Aorta (tissue), 5 donors: ENCODE measurements at regions of chr17 and their contacts with region 1.

Region 1: DNA sequence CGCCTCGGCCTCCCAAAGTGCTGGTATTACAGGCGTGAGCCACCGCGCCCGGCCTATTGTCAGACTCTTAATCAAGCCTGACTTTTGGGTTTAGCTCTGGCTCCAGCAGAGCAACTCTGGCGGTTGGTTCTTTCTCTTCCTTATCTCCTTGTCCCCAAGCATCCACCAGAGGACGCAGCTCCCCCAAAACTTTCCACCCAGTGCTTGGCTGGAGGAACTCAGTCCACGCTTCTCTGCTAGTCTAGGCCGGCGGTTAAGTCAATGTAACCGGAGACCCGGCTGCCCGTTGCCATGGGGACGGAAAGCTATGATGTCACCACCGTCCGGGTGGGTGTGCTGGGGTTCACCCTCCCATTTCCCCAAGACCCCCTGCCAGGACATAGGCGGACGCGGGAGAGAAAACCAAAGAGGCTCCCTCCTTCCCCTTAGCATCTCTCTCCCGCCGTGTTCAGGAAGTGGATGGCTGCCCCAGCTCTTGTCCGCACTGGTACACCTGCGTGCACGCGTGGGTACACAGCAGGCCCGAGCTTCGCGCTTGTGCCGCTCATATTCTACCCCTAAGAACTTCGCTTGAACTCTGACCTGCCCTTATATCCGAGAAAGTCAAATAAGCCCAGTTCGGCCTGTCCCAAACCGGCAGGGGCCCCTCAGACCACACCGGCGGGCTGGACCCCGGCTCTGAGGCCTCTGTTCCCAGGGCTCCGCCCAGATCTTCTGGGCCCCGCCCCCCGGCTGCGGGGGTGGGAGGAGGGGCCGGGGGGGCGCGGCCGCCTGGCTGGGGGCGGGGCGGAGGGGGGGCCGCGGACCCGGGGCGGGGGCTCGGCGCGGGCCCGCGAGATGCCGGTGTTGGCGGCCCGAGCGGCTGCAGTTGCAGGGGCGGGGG is at the start of gene RND2:
- DNase-seq: peak; percentile 94 to 96
- ATAC-seq: peak; percentile 82
- H3K4me3 ChIP-seq: peak within 1 kb of the TSS; percentile 49 to 76
- H3K27ac ChIP-seq: peak within 1 kb of the TSS in 1 of 2 donors; percentile 61
- H3K4me1 ChIP-seq: no peaks in the 10 kb centered on the region
- H3K27me3 ChIP-seq: no peaks in the 10 kb centered on the region
- total RNA-seq, gene RND2: 1.1 to 2.7 TPM

Region 2: DNA sequence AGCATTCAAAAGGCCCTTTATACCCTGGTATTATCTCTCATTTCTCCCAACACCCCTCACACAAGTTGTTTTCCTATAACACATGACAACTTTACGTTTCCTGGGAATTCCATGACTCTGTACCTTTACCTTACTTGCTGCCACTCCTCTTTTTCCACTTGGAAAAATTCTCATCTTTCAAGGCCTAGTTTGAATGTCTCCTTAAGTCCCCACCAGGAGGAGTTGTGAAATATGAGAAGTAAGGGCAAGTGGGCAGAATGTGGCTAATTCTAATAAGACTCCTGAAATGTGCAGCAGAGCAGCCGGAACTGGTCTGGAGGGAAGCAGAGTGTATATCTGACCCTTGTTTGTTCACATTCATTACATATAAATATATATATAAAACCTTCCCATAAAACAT is 60.8 kb after region 1 on chr17:
- intact Hi-C with region 1: loop called (anchors 5 kb)
- DNase-seq: no peak
- ATAC-seq: no peak
- H3K4me3 ChIP-seq: no peak overlapping the region
- H3K27ac ChIP-seq: peak overlapping the region in 1 of 2 donors; percentile 82
- H3K4me1 ChIP-seq: peaks cover 0 to 2% of the 10 kb centered on the region in 2 donors
- H3K27me3 ChIP-seq: no peaks in the 10 kb centered on the region

Region 3: GRCh38 chr17:43094129-43094835 is 69.6 kb after region 1 on chr17:
- intact Hi-C with region 1: loop called (anchors 5 kb)
- DNase-seq: no peak
- ATAC-seq: no peak
- H3K4me3 ChIP-seq: no peak overlapping the region
- H3K27ac ChIP-seq: peak overlapping the region in 1 of 2 donors; percentile 87
- H3K4me1 ChIP-seq: peaks cover 2 to 18% of the 10 kb centered on the region in 2 donors
- H3K27me3 ChIP-seq: no peaks in the 10 kb centered on the region

Region 4: DNA sequence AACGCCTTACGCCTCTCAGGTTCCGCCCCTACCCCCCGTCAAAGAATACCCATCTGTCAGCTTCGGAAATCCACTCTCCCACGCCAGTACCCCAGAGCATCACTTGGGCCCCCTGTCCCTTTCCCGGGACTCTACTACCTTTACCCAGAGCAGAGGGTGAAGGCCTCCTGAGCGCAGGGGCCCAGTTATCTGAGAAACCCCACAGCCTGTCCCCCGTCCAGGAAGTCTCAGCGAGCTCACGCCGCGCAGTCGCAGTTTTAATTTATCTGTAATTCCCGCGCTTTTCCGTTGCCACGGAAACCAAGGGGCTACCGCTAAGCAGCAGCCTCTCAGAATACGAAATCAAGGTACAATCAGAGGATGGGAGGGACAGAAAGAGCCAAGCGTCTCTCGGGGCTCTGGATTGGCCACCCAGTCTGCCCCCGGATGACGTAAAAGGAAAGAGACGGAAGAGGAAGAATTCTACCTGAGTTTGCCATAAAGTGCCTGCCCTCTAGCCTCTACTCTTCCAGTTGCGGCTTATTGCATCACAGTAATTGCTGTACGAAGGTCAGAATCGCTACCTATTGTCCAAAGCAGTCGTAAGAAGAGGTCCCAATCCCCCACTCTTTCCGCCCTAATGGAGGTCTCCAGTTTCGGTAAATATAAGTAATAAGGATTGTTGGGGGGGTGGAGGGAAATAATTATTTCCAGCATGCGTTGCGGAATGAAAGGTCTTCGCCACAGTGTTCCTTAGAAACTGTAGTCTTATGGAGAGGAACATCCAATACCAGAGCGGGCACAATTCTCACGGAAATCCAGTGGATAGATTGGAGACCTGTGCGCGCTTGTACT is 100.7 kb after region 1 on chr17 and contains the start of gene BRCA1:
- intact Hi-C with region 1: loop called (anchors 2 to 5 kb)
- DNase-seq: peak; percentile 94 to 95
- ATAC-seq: peak; percentile 98
- H3K4me3 ChIP-seq: peak within 1 kb of the TSS; percentile 67 to 75
- H3K27ac ChIP-seq: peak within 1 kb of the TSS in 1 of 2 donors; percentile 72
- H3K4me1 ChIP-seq: no peaks in the 10 kb centered on the region
- H3K27me3 ChIP-seq: no peaks in the 10 kb centered on the region
- total RNA-seq, gene BRCA1: 4.3 to 6.6 TPM

Region 5: DNA sequence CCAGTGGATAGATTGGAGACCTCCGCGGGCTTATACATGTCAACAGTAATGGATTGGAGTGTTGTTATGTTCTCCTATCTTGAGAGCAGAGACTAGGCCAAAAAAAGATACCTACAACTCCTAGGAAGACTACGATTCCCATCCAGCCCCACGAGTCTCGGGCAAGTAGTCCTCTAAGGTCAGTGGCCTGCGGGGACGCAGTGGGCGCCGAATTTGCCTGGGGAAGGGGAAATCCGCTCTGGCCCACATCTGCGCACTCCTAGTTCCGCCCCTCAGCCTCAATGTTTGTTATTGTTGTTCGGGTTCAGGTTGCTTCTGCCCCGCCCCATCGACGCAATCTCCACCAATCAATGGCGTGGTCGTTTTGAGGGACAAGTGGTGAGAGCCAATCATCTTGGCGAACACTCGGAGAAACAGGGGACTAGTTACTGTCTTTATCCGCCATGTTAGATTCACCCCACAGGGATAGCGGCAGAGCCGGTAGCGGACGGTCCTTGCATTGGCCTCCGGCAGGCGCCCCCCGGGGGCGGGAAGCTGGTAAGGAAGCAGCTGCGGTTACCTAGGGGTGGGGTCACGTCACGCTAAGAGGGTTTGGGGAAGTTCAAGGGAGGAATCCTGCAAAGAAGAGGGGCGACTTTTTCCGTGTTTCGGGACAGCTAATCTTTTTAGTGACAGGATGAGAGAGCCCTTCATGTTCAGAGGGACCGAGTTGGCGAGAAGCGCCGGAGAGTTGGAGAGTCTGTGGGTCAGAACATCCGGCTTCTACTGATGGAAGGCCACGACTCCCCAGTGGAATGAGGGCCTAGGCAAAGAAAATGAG is 146.3 kb after region 1 on chr17 and contains the start of gene NBR1:
- intact Hi-C with region 1: loop called (anchors 2 to 5 kb)
- DNase-seq: peak; percentile 94 to 96
- ATAC-seq: peak; percentile 94
- H3K4me3 ChIP-seq: peak within 1 kb of the TSS; percentile 79 to 85
- H3K27ac ChIP-seq: peak within 1 kb of the TSS; percentile 96 to 97
- H3K4me1 ChIP-seq: no peaks in the 10 kb centered on the region
- H3K27me3 ChIP-seq: no peaks in the 10 kb centered on the region
- total RNA-seq, gene NBR1: 93.7 to 99.1 TPM

Region 6: DNA sequence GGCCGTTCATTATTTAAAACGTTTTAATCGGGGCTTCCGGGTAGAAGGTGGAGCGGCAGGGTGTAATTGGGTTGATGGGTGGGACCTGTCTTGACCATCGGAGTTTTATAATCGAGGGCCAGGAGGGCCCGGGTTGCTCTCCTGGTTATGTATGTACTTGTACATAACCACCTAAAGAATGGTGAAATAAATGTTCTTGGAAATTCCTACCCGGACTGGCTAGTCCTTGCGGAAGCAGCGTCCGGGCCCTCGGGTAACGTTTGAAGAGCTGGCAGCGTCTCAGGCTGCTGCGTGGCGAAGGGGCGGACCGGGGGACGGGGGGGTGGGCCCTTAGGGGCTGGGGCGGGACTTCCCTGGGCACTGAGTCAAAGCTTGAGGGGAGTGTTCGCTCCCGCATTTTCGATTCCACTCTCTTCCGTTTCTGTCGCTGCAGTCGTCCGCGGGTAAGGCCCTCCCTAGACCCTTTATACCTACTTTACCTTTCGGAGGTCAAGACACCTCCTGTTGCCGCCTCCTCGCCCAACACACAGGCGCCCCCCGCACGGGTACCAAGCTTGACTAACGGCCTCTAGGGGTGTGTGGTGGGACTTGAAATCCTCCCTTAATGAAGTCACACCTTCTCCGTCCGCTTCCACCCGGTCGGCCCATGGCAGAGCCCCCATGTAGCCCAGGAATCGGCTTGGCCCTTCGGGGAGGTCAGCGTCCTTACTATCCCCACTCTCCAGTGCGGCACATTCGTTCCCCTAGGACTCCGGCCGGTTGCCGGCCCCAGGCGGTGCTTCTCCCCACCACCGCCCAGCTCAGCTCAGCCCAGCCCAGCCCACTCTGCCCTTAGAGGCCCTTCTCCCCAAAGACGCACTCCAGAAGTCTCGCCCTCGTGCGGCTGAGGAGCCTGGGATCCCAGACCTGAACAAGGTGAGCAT is 187.1 kb after region 1 on chr17 and contains the start of gene TMEM106A:
- intact Hi-C with region 1: loop called in 1 of 2 experiments (anchors 5 kb)
- DNase-seq: peak; percentile 90 to 94
- ATAC-seq: peak; percentile 88
- H3K4me3 ChIP-seq: peak within 1 kb of the TSS; percentile 43 to 87
- H3K27ac ChIP-seq: peak within 1 kb of the TSS; percentile 69 to 70
- H3K4me1 ChIP-seq: no peaks in the 10 kb centered on the region
- H3K27me3 ChIP-seq: no peaks in the 10 kb centered on the region
- total RNA-seq, gene TMEM106A: 20.2 to 37.2 TPM